ENCODE measurements at regions of chr10 and their contacts with region 1.

Region 1: DNA sequence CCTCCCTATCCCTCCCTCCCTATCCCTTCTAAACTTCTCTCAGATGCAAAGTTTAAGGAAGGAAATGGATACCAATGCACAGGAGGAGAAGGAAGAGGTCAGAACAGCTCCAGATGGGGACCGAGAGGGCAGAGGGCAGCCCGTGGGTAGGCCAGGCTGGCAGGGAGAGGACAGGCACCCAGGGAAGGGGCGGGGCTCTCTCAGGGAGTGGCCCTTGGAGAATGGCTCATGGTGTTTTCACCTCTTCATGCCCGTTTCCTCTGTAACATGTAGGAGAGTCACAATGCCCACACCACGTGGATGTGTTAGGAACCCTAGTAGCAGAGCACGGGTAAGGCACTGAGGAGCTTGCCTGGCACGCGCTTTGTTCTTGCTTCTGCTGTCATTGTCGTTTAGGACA is 264.5 kb downstream of the CELF2 start:
- DNase-seq: no peak
- H3K4me3 ChIP-seq: no peak overlapping the region
- H3K27ac ChIP-seq: no peak overlapping the region
- H3K4me1 ChIP-seq: no peaks in the 10 kb centered on the region
- H3K27me3 ChIP-seq: peaks cover 54% of the 10 kb centered on the region
- CTCF ChIP-seq: no peak

Region 2: GRCh38 chr10:9999627-10000026 is 1282.5 kb before region 1 on chr10:
- CTCF ChIA-PET with region 1: no interaction called
- POLR2A ChIA-PET with region 1: interaction called, 11 read pairs
- intact Hi-C with region 1: no loop called
- DNase-seq: no peak
- H3K4me3 ChIP-seq: no peak overlapping the region
- H3K27ac ChIP-seq: no peak overlapping the region
- H3K4me1 ChIP-seq: no peaks in the 10 kb centered on the region
- H3K27me3 ChIP-seq: no peaks in the 10 kb centered on the region
- CTCF ChIP-seq: no peak

Region 3: DNA sequence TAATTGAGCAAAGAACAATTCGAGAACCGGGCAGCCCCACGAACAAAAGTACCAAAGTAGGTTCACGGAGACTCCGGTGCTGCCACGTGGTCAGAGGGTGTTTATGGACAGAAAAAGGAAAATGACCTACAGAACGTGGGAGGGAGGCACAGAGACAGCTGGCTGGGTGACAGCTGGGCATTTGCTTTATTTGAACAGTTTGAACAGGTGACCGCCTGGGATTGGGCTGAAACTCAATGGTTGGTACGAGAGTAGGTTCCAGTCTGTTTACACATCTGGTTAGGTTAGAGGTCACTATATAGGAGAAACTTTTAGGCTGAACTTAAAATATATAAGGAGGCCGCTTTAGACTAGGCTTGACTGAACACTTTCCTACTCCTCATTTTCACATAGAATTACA is 315.1 kb before region 1 on chr10:
- CTCF ChIA-PET with region 1: no interaction called
- POLR2A ChIA-PET with region 1: no interaction called
- intact Hi-C with region 1: no loop called
- DNase-seq: no peak
- H3K4me3 ChIP-seq: no peak overlapping the region
- H3K27ac ChIP-seq: no peak overlapping the region
- H3K4me1 ChIP-seq: no peaks in the 10 kb centered on the region
- H3K27me3 ChIP-seq: 0 out of 2 replicates have a peak, but pooled peaks cover 8% of the 10 kb centered on the region
- CTCF ChIP-seq: no peak